Ascending aorta (tissue), 2 donors: ENCODE measurements at regions of chr4 and their contacts with region 1.

Region 1: DNA sequence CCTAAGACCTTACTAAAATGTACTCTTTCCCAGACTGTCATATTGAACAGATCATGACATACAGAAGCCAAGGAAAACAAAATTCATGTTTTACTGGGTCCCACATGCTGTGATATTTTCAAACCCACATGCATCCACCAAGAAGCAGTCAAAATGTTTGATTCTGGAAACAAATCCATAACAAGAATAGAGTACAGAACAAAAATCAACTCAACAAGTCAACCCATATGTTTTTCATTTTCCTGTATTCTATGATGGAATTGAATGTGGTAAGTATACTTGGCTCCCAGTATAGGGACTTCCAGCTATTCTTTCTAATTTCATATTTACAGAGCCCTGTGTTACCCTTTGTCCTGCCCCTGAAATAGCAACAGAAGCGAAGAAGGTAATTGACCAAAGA is 106.8 kb downstream of the COL25A1 start:
- DNase-seq: no peak
- H3K4me3 ChIP-seq: no peak overlapping the region
- H3K27ac ChIP-seq: no peak overlapping the region
- H3K4me1 ChIP-seq: no peaks in the 10 kb centered on the region
- H3K27me3 ChIP-seq: no peaks in the 10 kb centered on the region
- CTCF ChIP-seq: no peak

Region 2: DNA sequence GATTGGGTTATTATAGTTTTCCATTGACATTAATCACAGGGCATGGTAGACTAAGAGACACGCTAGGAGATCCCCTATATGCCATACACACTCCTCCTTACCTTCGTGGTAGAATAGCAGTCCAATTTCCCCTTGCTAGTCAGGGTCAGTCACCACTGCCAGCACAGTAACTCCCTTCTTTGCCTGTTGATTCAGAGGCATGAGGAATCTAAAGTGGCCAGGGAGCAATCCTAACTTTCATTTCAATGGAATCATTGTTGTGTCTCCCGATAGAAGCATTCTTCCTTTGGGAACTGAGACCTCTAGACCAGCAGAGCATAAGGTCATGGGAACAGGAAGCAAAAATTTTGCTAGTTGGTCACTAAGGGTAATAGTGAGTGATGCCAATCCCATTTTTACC is 55.8 kb after region 1 on chr4:
- intact Hi-C with region 1: loop called (anchors 10 kb)
- DNase-seq: no peak
- H3K4me3 ChIP-seq: no peak overlapping the region
- H3K27ac ChIP-seq: no peak overlapping the region
- H3K4me1 ChIP-seq: no peaks in the 10 kb centered on the region
- H3K27me3 ChIP-seq: no peaks in the 10 kb centered on the region
- CTCF ChIP-seq: no peak

Region 3: GRCh38 chr4:109302361-109303139 is 106.9 kb after region 1 on chr4 and contains the start of gene COL25A1:
- intact Hi-C with region 1: no loop called
- DNase-seq: peak; percentile 12 to 76
- H3K4me3 ChIP-seq: peak within 1 kb of the TSS; percentile 67 to 68
- H3K27ac ChIP-seq: peak within 1 kb of the TSS; percentile 15 to 46
- H3K4me1 ChIP-seq: peaks cover 0 to 8% of the 10 kb centered on the region in 2 donors
- H3K27me3 ChIP-seq: no peaks in the 10 kb centered on the region
- CTCF ChIP-seq: no peak
- total RNA-seq, gene COL25A1: 5.6 TPM